ENCODE measurements at regions of chr11 and their contacts with region 1.

Region 1: DNA sequence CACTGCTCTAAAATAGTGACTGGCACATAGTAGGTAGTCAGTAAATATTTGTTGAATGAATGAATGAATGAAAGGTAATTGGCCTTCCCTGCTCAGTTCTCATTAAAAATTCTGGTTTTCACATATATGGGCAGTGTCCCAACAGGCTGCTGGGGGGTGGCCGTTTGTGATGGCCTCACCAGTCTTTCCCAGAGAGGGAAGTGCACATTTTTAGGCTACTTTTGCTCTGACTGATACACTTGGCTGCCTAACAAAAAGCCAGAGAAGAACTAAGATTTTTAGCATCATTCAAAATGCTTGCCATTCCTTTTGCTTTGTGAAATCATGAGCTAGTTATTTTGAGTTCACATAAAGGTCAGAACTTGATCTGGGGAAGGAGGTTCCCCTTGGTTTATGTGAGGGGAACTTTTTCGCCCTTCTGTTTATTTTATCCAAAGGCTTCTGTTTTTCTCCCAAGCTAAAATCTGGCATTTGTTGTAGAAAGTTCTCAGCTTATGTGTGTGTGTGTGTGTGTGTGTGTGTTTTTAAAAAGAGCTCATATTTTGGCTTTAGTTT is 83.1 kb downstream of the PTPRJ start:
- DNase-seq: no peak
- ATAC-seq: no peak
- H3K4me3 ChIP-seq: no peak overlapping the region
- H3K4me3 Mint-ChIP-seq: no peak overlapping the region
- H3K27ac ChIP-seq: no peak overlapping the region
- H3K27ac Mint-ChIP-seq: peak overlapping the region; percentile 75 to 78
- H3K4me1 ChIP-seq: peaks cover 26% of the 10 kb centered on the region
- H3K4me1 Mint-ChIP-seq: peaks cover 63 to 76% of the 10 kb centered on the region in 2 donors
- H3K27me3 ChIP-seq: no peaks in the 10 kb centered on the region
- H3K27me3 Mint-ChIP-seq: no peaks in the 10 kb centered on the region
- CTCF ChIP-seq: no peak

Region 2: GRCh38 chr11:48103621-48104562 is 40.4 kb after region 1 on chr11:
- intact Hi-C with region 1: loop called (anchors 5 kb)
- DNase-seq: no peak
- ATAC-seq: no peak
- H3K4me3 ChIP-seq: no peak overlapping the region
- H3K4me3 Mint-ChIP-seq: no peak overlapping the region
- H3K27ac ChIP-seq: no peak overlapping the region
- H3K27ac Mint-ChIP-seq: peak overlapping the region in 1 of 2 donors; percentile 74
- H3K4me1 ChIP-seq: peaks cover 49% of the 10 kb centered on the region
- H3K4me1 Mint-ChIP-seq: peaks cover 62 to 86% of the 10 kb centered on the region in 2 donors
- H3K27me3 ChIP-seq: no peaks in the 10 kb centered on the region
- H3K27me3 Mint-ChIP-seq: no peaks in the 10 kb centered on the region
- CTCF ChIP-seq: no peak

Measured in natural killer cell (primary cell).